CD8-positive, alpha-beta T cell (primary cell): ENCODE measurements at regions of chr6 and their contacts with region 1.

Region 1: GRCh38 chr6:109690737-109691621 is at the starts of genes AK9 and FIG4:
- DNase-seq: peak; percentile 68 to 93 (median 90)
- ATAC-seq: peak; percentile 96
- H3K4me3 ChIP-seq: peak within 1 kb of the TSS; percentile 85 to 91
- H3K4me3 Mint-ChIP-seq: peak within 1 kb of the TSS; percentile 93
- H3K27ac ChIP-seq: peak within 1 kb of the TSS; percentile 81 to 91
- H3K27ac Mint-ChIP-seq: peak within 1 kb of the TSS; percentile 98
- H3K4me1 ChIP-seq: peaks cover 22% of the 10 kb centered on the region
- H3K4me1 Mint-ChIP-seq: peaks cover 27% of the 10 kb centered on the region
- H3K27me3 ChIP-seq: no peaks in the 10 kb centered on the region
- H3K27me3 Mint-ChIP-seq: no peaks in the 10 kb centered on the region
- CTCF ChIP-seq: no peak
- total RNA-seq, gene AK9: 5.1 to 6.5 TPM
- total RNA-seq, gene FIG4: 2.3 TPM

Region 2: DNA sequence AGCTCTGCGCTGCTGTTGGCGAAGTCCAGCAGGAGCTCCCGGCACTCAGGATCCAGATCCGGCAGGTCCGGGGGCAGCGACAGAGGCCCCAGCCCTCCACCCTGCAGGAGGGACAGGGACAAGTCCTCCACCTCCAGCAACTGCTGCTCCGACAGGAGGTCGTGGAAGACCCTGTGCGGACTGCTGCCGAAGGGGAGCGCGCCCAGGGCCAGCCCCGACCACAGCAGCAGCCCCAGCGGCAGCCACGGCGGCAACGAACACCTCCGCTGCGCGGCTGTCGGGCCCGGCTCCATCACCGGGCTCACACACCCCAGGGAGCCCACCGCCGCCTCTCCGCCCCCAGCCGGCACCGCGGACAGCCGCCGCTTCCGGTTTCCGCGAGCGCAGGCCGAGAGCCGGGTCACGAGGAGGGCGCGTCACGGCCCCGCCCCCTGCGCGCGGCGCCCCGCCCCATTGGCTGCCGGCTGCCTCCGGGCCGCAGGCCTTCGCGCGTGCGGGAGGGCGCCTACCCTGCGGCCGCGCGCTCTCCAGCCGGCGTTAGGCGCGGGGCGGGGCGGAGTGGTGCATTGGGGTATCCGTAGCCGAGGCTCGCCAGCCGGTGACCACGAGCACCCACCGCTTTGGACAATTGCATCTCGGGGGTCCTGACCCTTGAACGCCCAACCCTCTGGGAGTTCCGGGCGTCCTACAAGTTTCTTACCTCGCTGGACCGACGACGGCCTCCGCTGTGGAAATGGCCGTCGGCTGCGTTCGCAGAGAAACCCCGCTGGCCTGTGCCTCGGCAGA is 1616.4 kb before region 1 on chr6 and contains the start of gene OSTM1:
- CTCF ChIA-PET with region 1: no interaction called
- POLR2A ChIA-PET with region 1: no interaction called
- intact Hi-C with region 1: loop called in 1 of 2 experiments (anchors 10 kb)
- DNase-seq: peak; percentile 89 to 97 (median 94)
- ATAC-seq: peak; percentile 96
- H3K4me3 ChIP-seq: peak within 1 kb of the TSS; percentile 98 to 99
- H3K4me3 Mint-ChIP-seq: peak within 1 kb of the TSS; percentile 89
- H3K27ac ChIP-seq: peak within 1 kb of the TSS; percentile 85 to 88
- H3K27ac Mint-ChIP-seq: peak within 1 kb of the TSS; percentile 88
- H3K4me1 ChIP-seq: peaks cover 19% of the 10 kb centered on the region
- H3K4me1 Mint-ChIP-seq: peaks cover 29% of the 10 kb centered on the region
- H3K27me3 ChIP-seq: no peaks in the 10 kb centered on the region
- H3K27me3 Mint-ChIP-seq: peaks cover 2% of the 10 kb centered on the region
- CTCF ChIP-seq: no peak
- total RNA-seq, gene OSTM1: 20.0 to 25.0 TPM

Region 3: DNA sequence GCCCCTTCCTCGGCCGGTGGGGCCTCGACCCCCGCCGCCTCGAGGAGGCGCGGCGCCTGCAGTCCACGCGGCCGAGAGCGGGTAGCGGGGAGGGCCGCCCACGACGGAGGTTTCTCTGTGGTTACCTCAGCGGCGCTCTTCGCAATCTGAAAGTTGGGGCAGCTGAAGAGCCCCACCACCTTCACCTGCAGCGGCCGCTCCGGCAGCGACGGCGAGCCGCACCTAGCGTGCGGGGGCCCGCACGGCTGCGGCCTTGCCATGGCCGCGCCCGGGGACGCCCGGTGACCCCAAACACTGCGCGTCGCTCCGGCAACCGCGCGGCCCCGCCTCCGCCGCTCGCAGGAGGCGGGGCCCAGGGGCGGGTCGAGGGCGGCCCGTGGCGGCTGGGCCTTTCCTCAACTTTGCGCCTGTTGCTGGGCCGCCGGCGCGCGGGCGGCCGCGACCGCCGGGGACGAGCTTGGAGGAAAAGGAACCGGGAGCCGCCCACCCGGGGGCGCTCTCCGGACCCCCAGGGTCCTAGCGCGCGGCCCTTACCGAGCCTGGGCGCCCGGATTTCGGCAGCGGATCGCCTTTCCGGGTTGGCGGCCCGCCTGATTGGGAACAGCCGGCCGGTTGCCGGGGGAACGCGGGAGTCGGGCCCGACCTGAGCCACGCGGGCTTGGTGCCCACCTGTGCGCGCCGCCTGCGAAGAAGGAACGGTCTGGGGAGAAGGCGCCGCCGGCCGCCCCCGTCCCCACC is 250.5 kb before region 1 on chr6 and contains the starts of genes PPIL6 and SMPD2:
- CTCF ChIA-PET with region 1: no interaction called
- POLR2A ChIA-PET with region 1: interaction called, 4 read pairs
- intact Hi-C with region 1: loop called (anchors 1 to 5 kb)
- DNase-seq: peak; percentile 61 to 92 (median 75)
- ATAC-seq: peak; percentile 79
- H3K4me3 ChIP-seq: peak within 1 kb of the TSS; percentile 68 to 92
- H3K4me3 Mint-ChIP-seq: peak within 1 kb of the TSS; percentile 89
- H3K27ac ChIP-seq: peak within 1 kb of the TSS; percentile 69 to 83
- H3K27ac Mint-ChIP-seq: peak within 1 kb of the TSS; percentile 93
- H3K4me1 ChIP-seq: peaks cover 26% of the 10 kb centered on the region
- H3K4me1 Mint-ChIP-seq: peaks cover 35% of the 10 kb centered on the region
- H3K27me3 ChIP-seq: no peaks in the 10 kb centered on the region
- H3K27me3 Mint-ChIP-seq: no peaks in the 10 kb centered on the region
- CTCF ChIP-seq: peak; percentile 31
- total RNA-seq, gene PPIL6: 1.3 to 1.4 TPM
- total RNA-seq, gene SMPD2: 22.8 to 23.9 TPM

Region 4: GRCh38 chr6:109526905-109527628 is 163.9 kb before region 1 on chr6:
- CTCF ChIA-PET with region 1: interaction called, 3 read pairs
- POLR2A ChIA-PET with region 1: no interaction called
- intact Hi-C with region 1: loop called in 1 of 2 experiments (anchors 5 kb)
- DNase-seq: peak in 8 of 9 experiments; percentile 31 to 74 (median 55)
- ATAC-seq: peak; percentile 68
- H3K4me3 ChIP-seq: no peak overlapping the region
- H3K4me3 Mint-ChIP-seq: no peak overlapping the region
- H3K27ac ChIP-seq: no peak overlapping the region
- H3K27ac Mint-ChIP-seq: no peak overlapping the region
- H3K4me1 ChIP-seq: no peaks in the 10 kb centered on the region
- H3K4me1 Mint-ChIP-seq: peaks cover 3% of the 10 kb centered on the region
- H3K27me3 ChIP-seq: no peaks in the 10 kb centered on the region
- H3K27me3 Mint-ChIP-seq: no peaks in the 10 kb centered on the region
- CTCF ChIP-seq: peak; percentile 58

Region 5: DNA sequence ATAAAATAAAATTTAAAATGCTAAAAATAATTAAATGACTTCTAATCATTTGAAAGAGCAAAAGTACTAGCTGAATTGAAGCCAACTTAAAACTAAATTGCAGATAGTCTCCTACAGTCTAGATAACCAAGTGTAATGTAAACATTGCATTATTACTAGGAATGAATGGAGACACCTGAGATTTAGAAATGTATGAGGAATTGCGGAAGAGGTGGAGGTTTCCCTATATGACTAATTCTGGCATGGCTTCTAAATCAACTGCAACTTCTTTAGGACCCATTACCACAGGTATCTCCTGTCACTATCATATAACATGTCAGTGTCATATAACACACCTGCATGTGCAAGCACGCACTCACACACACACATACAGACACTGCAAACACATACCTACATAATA is 274.0 kb after region 1 on chr6:
- CTCF ChIA-PET with region 1: no interaction called
- POLR2A ChIA-PET with region 1: no interaction called
- intact Hi-C with region 1: no loop called
- DNase-seq: no peak
- ATAC-seq: no peak
- H3K4me3 ChIP-seq: no peak overlapping the region
- H3K4me3 Mint-ChIP-seq: no peak overlapping the region
- H3K27ac ChIP-seq: no peak overlapping the region
- H3K27ac Mint-ChIP-seq: no peak overlapping the region
- H3K4me1 ChIP-seq: no peaks in the 10 kb centered on the region
- H3K4me1 Mint-ChIP-seq: no peaks in the 10 kb centered on the region
- H3K27me3 ChIP-seq: no peaks in the 10 kb centered on the region
- H3K27me3 Mint-ChIP-seq: peaks cover 5% of the 10 kb centered on the region
- CTCF ChIP-seq: no peak

Region 6: DNA sequence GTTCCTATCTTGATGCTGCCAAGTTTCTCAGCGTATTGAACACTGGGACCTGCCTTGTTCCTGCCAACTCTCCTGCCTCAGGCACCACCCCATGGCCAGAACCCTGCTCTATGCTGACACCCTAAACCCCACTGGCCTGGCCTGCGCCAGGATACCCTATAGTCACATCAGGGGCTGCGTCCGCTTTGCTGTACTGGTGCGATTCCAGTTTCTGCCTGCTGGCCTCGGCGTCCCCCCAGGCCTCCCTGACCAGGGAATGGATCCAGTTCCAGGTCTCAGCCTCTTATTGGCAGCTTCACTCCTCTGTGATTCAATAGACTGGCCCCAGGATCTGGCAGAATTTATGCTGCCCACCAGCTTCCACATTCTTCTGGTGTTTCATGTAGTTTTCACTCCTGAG is 342.1 kb after region 1 on chr6:
- CTCF ChIA-PET with region 1: no interaction called
- POLR2A ChIA-PET with region 1: no interaction called
- intact Hi-C with region 1: no loop called
- DNase-seq: no peak
- ATAC-seq: no peak
- H3K4me3 ChIP-seq: no peak overlapping the region
- H3K4me3 Mint-ChIP-seq: no peak overlapping the region
- H3K27ac ChIP-seq: no peak overlapping the region
- H3K27ac Mint-ChIP-seq: no peak overlapping the region
- H3K4me1 ChIP-seq: no peaks in the 10 kb centered on the region
- H3K4me1 Mint-ChIP-seq: peaks cover 2% of the 10 kb centered on the region
- H3K27me3 ChIP-seq: no peaks in the 10 kb centered on the region
- H3K27me3 Mint-ChIP-seq: no peaks in the 10 kb centered on the region
- CTCF ChIP-seq: no peak

Region 7: DNA sequence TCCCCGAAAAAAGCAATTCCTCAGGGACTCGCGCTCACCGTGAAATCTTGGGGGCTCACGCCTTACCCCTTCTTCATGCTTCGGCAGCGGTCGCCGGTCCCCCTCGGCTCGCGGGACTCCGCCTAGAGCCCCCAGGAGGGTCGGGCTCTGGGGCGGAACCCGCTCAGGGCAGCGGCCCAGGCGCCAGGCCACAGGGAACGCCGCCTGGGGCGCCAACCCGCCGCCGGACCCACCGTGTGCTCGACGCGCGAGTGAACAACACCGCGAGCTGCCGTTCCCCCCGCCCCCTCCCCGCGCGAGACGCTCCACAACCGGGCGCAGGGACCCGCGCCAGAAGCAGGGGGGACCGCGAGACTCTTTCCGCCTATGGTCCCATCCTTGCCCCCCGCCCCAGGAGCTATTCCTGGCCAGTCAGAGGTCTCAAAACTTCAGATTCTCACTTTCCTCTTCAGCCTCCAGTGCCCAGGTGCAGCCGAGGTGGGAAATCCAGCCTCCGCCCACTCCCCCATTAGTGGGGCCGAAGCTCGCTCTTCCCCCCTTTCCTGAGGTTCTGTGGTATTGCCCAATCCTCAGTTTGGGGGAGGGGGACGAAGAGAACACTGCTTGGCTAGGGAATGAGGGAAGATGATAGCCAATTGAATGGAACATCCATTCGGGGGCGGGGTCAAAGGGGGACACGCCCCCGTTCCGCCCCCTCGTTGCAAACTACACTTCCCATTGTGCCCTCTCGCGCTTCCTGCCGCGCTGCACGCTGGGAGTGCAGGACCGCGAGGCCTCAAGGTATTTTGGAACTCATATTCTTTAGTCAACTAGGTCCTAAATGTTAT is 488.6 kb after region 1 on chr6 and contains the start of gene WASF1:
- CTCF ChIA-PET with region 1: no interaction called
- POLR2A ChIA-PET with region 1: no interaction called
- intact Hi-C with region 1: loop called (anchors 1 to 5 kb)
- DNase-seq: peak; percentile 77 to 95 (median 89)
- ATAC-seq: peak; percentile 84
- H3K4me3 ChIP-seq: peak within 1 kb of the TSS; percentile 83 to 96
- H3K4me3 Mint-ChIP-seq: peak within 1 kb of the TSS; percentile 77
- H3K27ac ChIP-seq: peak within 1 kb of the TSS; percentile 72 to 79
- H3K27ac Mint-ChIP-seq: peak within 1 kb of the TSS; percentile 38
- H3K4me1 ChIP-seq: peaks cover 28% of the 10 kb centered on the region
- H3K4me1 Mint-ChIP-seq: peaks cover 7% of the 10 kb centered on the region
- H3K27me3 ChIP-seq: no peaks in the 10 kb centered on the region
- H3K27me3 Mint-ChIP-seq: peaks cover 9% of the 10 kb centered on the region
- CTCF ChIP-seq: no peak
- total RNA-seq, gene WASF1: 1.1 to 1.7 TPM